Activated T-helper 1 cell treated with anti-CD3 and anti-CD28 coated beads, Interleukin-12 subunit alpha, Interleukin-12 subunit beta, Interleukin-2, Interleukin-4 antibody, amounts not matched to agents 30 ng/mL and 10 ng/mL and 1 ng/mL, durations not matched to agents 14 hours and 24 hours and 36 hours (primary cell): ENCODE measurements at regions of chr2 and their contacts with region 1.

Region 1: DNA sequence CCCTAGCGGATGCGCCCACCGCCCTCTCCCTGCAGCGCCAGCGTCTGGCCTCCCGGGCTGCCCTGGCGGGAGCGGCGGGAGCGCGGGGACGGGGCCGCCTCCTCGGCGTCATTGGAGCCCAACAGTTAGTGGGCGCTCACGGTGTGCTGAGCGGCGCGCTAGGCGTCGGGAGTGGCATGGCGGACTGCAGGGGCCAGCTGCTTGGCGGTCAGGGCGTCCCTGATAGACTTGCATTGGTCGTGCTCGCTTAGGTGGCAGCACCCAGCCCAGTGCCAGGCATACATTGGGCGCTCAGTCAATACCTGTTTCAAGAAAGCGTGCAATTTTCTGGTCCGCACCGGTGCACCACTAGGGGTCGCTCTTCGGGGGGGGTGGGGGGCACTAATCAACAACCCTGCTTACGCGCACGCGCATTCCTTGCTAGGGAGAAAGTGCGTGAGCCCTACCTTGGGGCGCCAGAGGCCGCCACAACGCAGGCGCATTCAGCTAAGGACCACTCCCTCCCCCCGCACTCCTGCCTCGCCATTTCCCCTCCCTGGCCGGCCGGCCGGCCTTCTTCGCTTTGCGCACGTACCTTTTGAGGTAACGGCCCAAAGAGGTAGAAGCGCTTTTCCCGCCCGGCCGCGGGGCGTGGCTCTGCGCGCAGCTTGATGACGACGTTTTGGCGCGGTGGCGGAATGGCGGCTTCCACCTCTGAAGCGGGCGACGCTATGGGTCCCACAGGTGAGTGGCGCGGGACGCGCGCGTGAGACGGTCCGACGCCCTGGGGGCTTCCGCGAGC is 411 bp upstream of the MZT2A start:
- DNase-seq: peak; percentile 89
- H3K4me3 Mint-ChIP-seq: peak overlapping the region; percentile 98
- H3K27ac Mint-ChIP-seq: peak overlapping the region; percentile 97
- H3K4me1 Mint-ChIP-seq: peaks cover 18% of the 10 kb centered on the region
- H3K27me3 Mint-ChIP-seq: no peaks in the 10 kb centered on the region

Region 2: GRCh38 chr2:130355578-130356431 is 1136.8 kb before region 1 on chr2 and contains the start of gene PTPN18:
- intact Hi-C with region 1: no loop called
- DNase-seq: peak; percentile 67
- H3K4me3 Mint-ChIP-seq: peak within 1 kb of the TSS; percentile 83
- H3K27ac Mint-ChIP-seq: peak within 1 kb of the TSS; percentile 52
- H3K4me1 Mint-ChIP-seq: peaks cover 25% of the 10 kb centered on the region
- H3K27me3 Mint-ChIP-seq: no peaks in the 10 kb centered on the region
- total RNA-seq, gene PTPN18: 66.9 and 68.9 TPM in 2 replicates

Region 3: GRCh38 chr2:131093006-131093695 is 399.5 kb before region 1 on chr2 and contains the start of gene FAM168B:
- intact Hi-C with region 1: loop called (anchors 1 kb)
- DNase-seq: peak; percentile 89
- H3K4me3 Mint-ChIP-seq: peak within 1 kb of the TSS; percentile 93
- H3K27ac Mint-ChIP-seq: peak within 1 kb of the TSS; percentile 95
- H3K4me1 Mint-ChIP-seq: peaks cover 18% of the 10 kb centered on the region
- H3K27me3 Mint-ChIP-seq: no peaks in the 10 kb centered on the region
- total RNA-seq, gene FAM168B: 79.0 and 79.1 TPM in 2 replicates

Region 4: DNA sequence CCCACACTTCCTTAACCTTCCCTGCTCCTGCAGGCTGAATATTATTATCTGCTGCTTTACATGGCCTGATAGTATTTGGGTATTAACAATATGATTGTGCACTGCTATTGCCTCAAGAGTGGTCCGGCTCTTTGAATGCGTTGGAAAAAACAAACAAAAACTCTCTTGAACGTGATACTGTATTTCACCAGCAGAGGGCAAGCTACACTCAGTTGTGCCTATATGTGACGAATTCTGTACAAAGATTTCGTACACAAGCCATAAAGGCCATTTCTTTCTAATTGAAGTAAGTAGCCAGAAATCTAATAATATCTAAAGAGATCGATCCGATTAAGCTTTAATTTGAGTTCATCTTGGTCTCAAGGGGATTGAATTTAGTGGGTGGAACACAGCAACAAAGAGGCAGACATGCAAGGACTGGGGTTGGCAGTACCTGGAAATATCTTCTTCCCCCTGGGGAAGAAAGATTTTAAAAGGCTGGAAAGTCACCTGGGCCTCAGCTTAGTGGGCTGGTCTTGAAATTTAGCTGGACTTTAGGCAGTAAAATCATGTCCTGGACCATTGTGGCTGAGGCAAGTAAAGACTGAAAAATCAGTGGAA is 79.4 kb before region 1 on chr2:
- intact Hi-C with region 1: loop called (anchors 1 kb)
- DNase-seq: no peak
- H3K4me3 Mint-ChIP-seq: no peak overlapping the region
- H3K27ac Mint-ChIP-seq: no peak overlapping the region
- H3K4me1 Mint-ChIP-seq: peaks cover 12% of the 10 kb centered on the region
- H3K27me3 Mint-ChIP-seq: peaks cover 13% of the 10 kb centered on the region

Region 5: DNA sequence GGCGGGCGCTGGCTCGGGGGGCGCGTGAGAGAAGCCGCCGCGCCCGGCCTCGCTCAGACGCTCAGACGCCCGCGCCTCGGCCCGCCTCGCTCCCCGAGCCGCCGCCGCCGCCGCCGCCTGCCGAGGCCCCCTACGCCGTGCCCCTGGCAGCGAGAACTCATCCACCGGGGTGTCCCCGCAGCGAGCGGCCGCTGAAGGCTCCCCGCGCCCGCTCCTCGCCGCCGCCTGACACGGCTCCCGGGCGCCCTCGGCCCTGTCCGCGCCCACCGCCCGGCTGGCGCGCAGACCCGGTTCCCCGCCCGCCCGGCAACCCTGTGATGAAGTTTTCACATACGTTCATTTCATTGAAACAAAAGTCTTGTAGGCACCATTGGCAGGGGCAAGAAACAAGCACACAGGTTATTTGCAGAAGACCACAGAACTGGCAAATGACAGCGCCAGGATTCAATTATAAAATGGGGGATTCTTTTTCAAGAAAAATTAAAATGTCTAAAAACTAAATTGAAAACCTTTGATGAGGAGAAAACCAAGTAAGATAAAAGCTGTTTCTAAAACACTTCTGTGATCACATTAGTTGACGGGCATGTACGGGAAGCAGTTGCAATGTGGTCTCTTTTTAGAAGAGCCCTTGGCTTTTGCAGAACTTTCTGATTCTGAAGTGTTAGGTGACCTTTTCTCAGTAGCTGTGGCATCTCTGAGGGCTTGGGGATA is 67.2 kb before region 1 on chr2:
- intact Hi-C with region 1: loop called (anchors 5 kb)
- DNase-seq: no peak
- H3K4me3 Mint-ChIP-seq: peak overlapping the region; percentile 52
- H3K27ac Mint-ChIP-seq: peak overlapping the region; percentile 28
- H3K4me1 Mint-ChIP-seq: peaks cover 5% of the 10 kb centered on the region
- H3K27me3 Mint-ChIP-seq: peaks cover 70% of the 10 kb centered on the region

Region 6: DNA sequence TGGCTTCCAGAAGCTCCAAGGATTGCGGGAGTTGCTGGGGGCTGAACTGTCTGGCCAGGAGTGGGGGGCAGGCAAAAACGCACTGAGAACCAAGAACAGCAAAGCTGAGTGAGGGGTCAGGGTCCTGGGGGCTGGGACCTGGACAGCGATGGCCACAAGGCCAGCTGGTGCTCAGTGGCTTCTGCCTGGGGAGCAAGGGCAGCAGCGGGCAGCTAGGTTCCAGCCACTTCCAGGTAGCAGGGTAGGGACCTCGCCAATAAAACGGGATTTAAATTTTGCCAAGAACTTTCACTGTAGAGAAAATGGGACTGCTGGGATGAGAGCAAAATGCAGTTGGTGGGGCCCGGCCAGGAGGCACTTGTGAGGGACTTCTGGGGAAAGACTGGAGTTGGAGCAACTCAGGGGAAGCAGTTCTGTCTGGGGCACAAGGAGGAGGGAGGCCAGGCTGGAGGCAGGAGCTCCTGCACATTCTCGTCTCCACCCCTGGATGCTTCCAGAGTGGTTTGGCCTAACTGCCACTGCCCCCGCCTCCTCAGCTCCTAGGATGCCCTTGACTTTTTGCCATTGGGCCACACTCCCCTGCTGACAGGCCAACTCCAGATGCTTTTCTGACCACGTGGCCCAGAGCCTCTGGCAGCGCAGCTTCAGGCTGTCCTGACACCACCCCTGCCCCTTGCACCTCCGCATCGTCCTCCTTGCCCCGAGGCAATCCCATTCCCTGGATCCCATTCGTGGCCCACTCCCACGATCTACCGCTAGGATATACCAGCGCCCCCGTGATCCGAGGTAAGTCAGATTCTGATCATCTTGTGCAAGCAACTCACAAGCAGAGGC is 29.6 kb after region 1 on chr2:
- intact Hi-C with region 1: loop called (anchors 1 kb)
- DNase-seq: no peak
- H3K4me3 Mint-ChIP-seq: no peak overlapping the region
- H3K27ac Mint-ChIP-seq: no peak overlapping the region
- H3K4me1 Mint-ChIP-seq: peaks cover under 1% of the 10 kb centered on the region
- H3K27me3 Mint-ChIP-seq: peaks cover 1% of the 10 kb centered on the region

Region 7: DNA sequence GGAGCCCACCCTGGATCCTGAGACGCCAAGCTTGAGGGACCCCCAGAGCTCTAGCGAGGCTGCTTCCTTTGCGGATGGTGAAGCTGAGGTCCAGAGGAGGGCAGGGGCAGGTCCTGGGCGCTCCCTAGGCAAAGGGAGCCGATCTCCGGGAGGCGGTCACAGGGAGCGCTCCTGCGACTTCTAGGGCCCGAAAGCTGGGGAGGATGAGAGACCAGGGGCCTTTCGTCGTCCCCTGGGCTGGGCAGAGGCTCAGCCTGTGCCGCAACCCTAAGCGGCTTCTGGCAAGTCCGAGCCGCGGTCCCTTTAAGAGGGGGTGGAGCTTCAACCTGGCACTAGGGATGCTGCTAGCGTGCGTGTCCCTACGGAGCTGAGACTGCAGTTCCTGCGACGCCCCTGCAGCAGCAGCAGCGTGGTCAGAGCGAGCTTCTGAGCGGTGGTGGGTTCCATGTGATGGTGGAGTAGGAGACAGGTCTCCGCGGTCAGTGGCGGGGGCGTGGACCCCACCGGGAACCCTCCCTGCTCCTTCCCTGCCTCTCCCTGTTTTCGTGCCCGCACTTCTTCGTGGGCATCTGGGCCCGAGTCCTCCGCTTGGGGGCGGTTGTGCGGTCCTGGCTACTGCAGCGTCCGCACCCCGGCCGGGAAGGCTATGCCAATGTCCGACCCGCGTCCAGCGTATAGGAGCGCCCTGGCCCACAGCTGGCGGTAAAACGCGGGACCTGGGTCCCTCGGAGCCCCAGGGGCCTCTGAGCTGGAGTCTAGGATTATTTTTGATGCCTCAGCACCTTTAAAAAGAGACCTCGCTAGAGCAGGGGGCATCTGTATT is 189.7 kb after region 1 on chr2:
- intact Hi-C with region 1: loop called (anchors 2 kb)
- DNase-seq: peak; percentile 66
- H3K4me3 Mint-ChIP-seq: peak overlapping the region; percentile 90
- H3K27ac Mint-ChIP-seq: peak overlapping the region; percentile 76
- H3K4me1 Mint-ChIP-seq: peaks cover 42% of the 10 kb centered on the region
- H3K27me3 Mint-ChIP-seq: peaks cover 2% of the 10 kb centered on the region